T-cell (primary cell): ENCODE measurements at regions of chr5 and their contacts with region 1.

Region 1: DNA sequence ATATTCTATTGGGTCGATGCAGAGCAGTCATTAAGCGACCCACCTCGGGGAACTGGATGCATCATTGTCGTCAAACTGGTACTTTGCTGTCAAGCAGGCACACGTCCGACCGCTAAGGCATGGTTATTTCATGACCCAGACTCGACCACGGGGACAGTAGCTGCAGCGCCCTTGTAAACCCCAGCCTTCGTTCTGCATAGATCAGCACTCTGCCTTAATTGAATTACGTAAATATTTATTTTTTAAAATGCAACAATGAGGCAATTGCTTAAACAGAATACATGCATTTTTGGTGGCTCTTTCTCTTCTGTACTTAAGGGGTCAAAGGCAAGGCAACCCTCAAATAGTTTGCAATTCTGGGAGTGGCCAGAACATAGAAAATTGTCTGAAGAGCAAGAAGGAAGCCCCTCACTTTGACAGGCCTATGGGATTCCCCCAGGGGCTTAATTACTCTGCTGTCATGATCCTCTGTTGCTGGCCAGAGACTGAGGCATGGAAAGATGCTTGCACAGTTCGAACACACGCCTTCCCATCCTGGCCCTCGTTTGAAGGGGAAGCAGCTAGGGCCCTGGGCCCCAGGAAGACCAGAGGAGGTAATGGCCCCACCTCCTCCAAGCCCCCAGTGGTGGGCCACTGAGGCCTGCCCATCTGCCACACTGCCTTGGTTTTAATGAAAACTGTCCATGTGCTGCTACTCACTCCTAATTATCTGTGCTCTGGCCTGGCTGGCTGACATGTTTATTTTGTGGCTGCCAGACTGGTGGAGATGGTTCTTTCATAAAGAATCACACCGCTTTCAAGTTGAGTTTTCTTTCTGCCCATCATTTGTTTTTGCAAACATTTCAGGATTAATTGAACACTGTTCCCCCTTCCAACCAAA is 169.7 kb upstream of the MAST4 start:
- DNase-seq: no peak
- ATAC-seq: no peak
- H3K4me3 ChIP-seq: no peak overlapping the region
- H3K4me3 Mint-ChIP-seq: no peak overlapping the region
- H3K27ac ChIP-seq: no peak overlapping the region
- H3K27ac Mint-ChIP-seq: no peak overlapping the region
- H3K4me1 ChIP-seq: no peaks in the 10 kb centered on the region
- H3K4me1 Mint-ChIP-seq: no peaks in the 10 kb centered on the region
- H3K27me3 ChIP-seq: no peaks in the 10 kb centered on the region
- H3K27me3 Mint-ChIP-seq: peaks cover 4 to 6% of the 10 kb centered on the region in 2 donors

Region 2: GRCh38 chr5:66324357-66324756 is 102.1 kb before region 1 on chr5:
- CTCF ChIA-PET with region 1: no interaction called
- POLR2A ChIA-PET with region 1: interaction called in 1 of 2 experiments, 15 read pairs
- DNase-seq: no peak
- ATAC-seq: no peak
- H3K4me3 ChIP-seq: no peak overlapping the region
- H3K4me3 Mint-ChIP-seq: no peak overlapping the region
- H3K27ac ChIP-seq: no peak overlapping the region
- H3K27ac Mint-ChIP-seq: no peak overlapping the region
- H3K4me1 ChIP-seq: no peaks in the 10 kb centered on the region
- H3K4me1 Mint-ChIP-seq: no peaks in the 10 kb centered on the region
- H3K27me3 ChIP-seq: peaks cover 0 to 8% of the 10 kb centered on the region in 2 experiments
- H3K27me3 Mint-ChIP-seq: peaks cover 1 to 5% of the 10 kb centered on the region in 2 donors

Region 3: GRCh38 chr5:67118050-67118620 is 691.6 kb after region 1 on chr5:
- CTCF ChIA-PET with region 1: no interaction called
- POLR2A ChIA-PET with region 1: no interaction called
- DNase-seq: no peak
- ATAC-seq: no peak
- H3K4me3 ChIP-seq: no peak overlapping the region
- H3K4me3 Mint-ChIP-seq: no peak overlapping the region
- H3K27ac ChIP-seq: no peak overlapping the region
- H3K27ac Mint-ChIP-seq: no peak overlapping the region
- H3K4me1 ChIP-seq: no peaks in the 10 kb centered on the region
- H3K4me1 Mint-ChIP-seq: no peaks in the 10 kb centered on the region
- H3K27me3 ChIP-seq: no peaks in the 10 kb centered on the region
- H3K27me3 Mint-ChIP-seq: no peaks in the 10 kb centered on the region